Activated CD8-positive, alpha-beta memory T cell treated with anti-CD3 and anti-CD28 coated beads, Interleukin-2, amount 10 ng/mL, durations not matched to agents 7 days and 5 days (primary cell): ENCODE measurements at regions of chr5 and their contacts with region 1.

Region 1: GRCh38 chr5:143008809-143009521 is 238.8 kb downstream of the ARHGAP26 start:
- DNase-seq: peak; percentile 93
- ATAC-seq: peak; percentile 94
- H3K4me3 Mint-ChIP-seq: peak overlapping the region; percentile 35
- H3K27ac Mint-ChIP-seq: peak overlapping the region; percentile 74
- H3K4me1 Mint-ChIP-seq: peaks cover 65% of the 10 kb centered on the region
- H3K27me3 Mint-ChIP-seq: no peaks in the 10 kb centered on the region

Region 2: DNA sequence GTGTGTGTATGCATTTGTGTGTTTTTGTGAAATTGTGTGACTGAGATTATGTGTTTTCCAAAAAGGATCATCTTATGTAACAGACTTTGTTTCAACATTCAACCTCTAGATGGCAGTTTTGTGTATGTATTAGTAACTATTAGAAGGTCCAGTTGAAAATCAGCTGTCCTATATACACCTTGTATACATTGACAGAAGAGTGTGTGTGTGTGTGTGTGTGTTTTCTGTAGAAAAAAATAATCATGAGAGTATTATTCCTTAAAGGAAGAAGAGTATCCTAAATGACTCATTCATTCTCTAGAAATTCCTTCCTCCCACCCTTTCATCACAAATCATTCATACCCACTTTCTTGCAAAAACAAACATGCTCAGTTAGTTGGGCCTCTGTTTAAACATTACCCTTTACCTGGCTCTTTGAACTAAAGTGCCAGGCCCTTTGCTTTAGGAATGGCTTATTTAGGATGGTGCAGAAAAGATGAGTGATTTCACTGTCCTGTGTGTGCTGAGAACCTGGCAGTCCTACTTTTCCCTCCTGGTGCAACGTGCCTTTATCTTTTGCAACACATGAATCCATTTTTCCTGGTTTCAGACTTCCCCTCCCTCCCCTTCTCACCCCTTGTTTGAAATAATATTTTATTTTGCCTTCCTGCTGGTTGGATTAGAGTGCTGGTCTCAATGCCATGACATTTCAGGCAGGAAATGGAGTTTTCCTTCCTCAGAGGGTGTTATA is 86.6 kb before region 1 on chr5:
- CTCF ChIA-PET with region 1: interaction called, 11 read pairs
- DNase-seq: no peak
- ATAC-seq: peak; percentile 52
- H3K4me3 Mint-ChIP-seq: no peak overlapping the region
- H3K27ac Mint-ChIP-seq: no peak overlapping the region
- H3K4me1 Mint-ChIP-seq: peaks cover 32% of the 10 kb centered on the region
- H3K27me3 Mint-ChIP-seq: no peaks in the 10 kb centered on the region

Region 3: DNA sequence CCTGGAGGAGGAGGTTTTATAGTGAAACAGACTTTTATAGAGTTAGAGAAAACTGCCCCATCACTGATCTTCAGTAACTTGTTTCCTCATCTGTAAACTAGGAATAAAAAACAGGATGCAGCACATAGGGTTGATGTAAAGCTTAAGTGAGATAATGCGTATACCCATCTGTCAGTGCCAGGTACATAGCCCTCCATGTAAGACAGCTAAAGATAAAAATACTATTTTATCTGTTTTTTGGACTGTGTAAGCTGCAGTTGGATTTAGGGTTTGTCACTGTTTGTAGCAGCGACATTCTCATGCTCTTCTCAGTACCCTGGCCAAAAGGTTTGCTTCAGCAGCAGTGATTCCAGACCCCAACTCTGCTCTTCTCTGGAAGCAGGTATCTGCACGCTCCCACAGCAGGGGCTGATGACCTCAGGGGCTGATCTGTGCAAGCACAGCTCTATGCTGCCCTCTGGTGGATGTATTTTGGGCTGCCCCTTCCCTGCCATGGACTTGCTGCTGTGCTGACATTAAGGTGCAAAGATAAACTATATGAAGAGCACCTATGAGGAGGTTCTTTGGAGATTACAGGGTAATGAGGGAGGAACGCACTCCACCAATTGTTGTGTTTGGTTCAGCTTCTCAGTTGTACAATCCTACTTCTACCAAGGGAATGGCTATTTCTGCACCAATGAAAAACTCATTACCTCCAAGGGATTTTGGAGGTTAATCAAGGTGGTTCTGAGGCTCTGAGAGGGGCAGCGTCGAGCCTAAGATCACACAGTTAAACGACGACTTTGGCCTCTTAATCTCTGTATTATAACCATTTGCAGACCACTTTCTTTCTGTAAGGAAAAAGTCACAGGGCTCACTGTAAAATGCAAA is 816.1 kb after region 1 on chr5:
- CTCF ChIA-PET with region 1: interaction called, 10 read pairs
- DNase-seq: peak; percentile 89
- ATAC-seq: peak; percentile 86
- H3K4me3 Mint-ChIP-seq: no peak overlapping the region
- H3K27ac Mint-ChIP-seq: no peak overlapping the region
- H3K4me1 Mint-ChIP-seq: peaks cover 21% of the 10 kb centered on the region
- H3K27me3 Mint-ChIP-seq: no peaks in the 10 kb centered on the region